SK-N-SH (cell line): ENCODE measurements at regions of chr6 and their contacts with region 1.

Region 1: DNA sequence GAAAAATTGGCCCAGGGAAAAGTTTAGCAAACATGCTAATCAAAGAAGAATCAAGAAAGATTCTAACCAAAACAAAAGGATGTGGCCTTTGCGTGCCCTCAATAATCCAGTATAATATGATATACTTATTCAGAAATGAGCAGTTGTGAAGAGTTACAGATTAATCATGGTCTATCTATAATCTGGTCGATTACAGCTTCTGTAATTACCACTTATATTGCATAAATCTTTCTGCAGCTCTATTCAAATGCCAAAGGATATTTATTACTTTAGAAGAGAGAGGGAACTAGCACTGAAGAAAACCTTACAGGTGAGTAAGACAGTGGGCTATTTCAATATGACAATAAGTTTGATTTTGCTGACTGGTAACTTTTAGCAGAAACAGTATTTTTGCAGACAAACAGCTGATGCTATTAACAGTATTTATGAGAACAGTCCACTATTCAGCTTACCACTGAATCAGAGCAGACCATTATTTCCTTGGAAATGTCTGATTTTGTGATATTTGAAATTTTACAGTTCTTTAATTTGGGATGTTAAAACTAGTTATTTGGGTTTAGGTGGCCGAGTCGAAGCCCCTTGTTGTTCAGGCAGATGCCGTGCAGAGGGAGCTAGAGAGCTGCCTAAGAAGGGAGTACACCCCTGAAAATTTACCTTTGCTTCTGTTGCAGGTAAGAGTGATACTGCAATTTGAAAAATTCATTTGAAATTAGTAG is 92.2 kb downstream of the CEP57L1 start:
- DNase-seq: peak; percentile 54
- H3K4me3 ChIP-seq: peak overlapping the region in 1 of 2 experiments; percentile 14; a peak in 1 of 4 replicates
- H3K27ac ChIP-seq: no peak overlapping the region
- H3K4me1 ChIP-seq: no peaks in the 10 kb centered on the region
- H3K27me3 ChIP-seq: peaks cover 9% of the 10 kb centered on the region; the same call in 1 of the 2 replicates
- CTCF ChIP-seq: peak; percentile 97
- EP300 ChIP-seq: no peak
- RAD21 ChIP-seq: peak; percentile 96

Region 2: GRCh38 chr6:109174911-109175310 is 12.6 kb before region 1 on chr6:
- CTCF ChIA-PET with region 1: interaction called, 20 read pairs
- POLR2A ChIA-PET with region 1: no interaction called
- DNase-seq: no peak
- H3K4me3 ChIP-seq: no peak overlapping the region
- H3K27ac ChIP-seq: peak overlapping the region in 1 of 2 experiments; percentile 36; a peak in 3 of 4 replicates
- H3K4me1 ChIP-seq: no peaks in the 10 kb centered on the region
- H3K27me3 ChIP-seq: no peaks in the 10 kb centered on the region
- CTCF ChIP-seq: no peak
- EP300 ChIP-seq: no peak
- RAD21 ChIP-seq: no peak

Region 3: GRCh38 chr6:109224116-109224875 is 36.7 kb after region 1 on chr6:
- CTCF ChIA-PET with region 1: interaction called, 13 read pairs
- POLR2A ChIA-PET with region 1: no interaction called
- DNase-seq: peak; percentile 43
- H3K4me3 ChIP-seq: no peak overlapping the region
- H3K27ac ChIP-seq: no peak overlapping the region; a peak in 1 of 4 replicates
- H3K4me1 ChIP-seq: peaks cover 0 to 19% of the 10 kb centered on the region in 2 experiments; a peak in 2 of 4 replicates
- H3K27me3 ChIP-seq: no peaks in the 10 kb centered on the region
- CTCF ChIP-seq: no peak
- EP300 ChIP-seq: peak in 1 of 2 experiments; percentile 59; a peak in 1 of 4 replicates
- RAD21 ChIP-seq: no peak

Region 4: GRCh38 chr6:109362102-109362884 is 174.7 kb after region 1 on chr6:
- CTCF ChIA-PET with region 1: interaction called, 10 read pairs
- POLR2A ChIA-PET with region 1: no interaction called
- DNase-seq: no peak
- H3K4me3 ChIP-seq: no peak overlapping the region
- H3K27ac ChIP-seq: no peak overlapping the region
- H3K4me1 ChIP-seq: no peaks in the 10 kb centered on the region
- H3K27me3 ChIP-seq: no peaks in the 10 kb centered on the region
- CTCF ChIP-seq: no peak
- EP300 ChIP-seq: no peak
- RAD21 ChIP-seq: no peak

Region 5: DNA sequence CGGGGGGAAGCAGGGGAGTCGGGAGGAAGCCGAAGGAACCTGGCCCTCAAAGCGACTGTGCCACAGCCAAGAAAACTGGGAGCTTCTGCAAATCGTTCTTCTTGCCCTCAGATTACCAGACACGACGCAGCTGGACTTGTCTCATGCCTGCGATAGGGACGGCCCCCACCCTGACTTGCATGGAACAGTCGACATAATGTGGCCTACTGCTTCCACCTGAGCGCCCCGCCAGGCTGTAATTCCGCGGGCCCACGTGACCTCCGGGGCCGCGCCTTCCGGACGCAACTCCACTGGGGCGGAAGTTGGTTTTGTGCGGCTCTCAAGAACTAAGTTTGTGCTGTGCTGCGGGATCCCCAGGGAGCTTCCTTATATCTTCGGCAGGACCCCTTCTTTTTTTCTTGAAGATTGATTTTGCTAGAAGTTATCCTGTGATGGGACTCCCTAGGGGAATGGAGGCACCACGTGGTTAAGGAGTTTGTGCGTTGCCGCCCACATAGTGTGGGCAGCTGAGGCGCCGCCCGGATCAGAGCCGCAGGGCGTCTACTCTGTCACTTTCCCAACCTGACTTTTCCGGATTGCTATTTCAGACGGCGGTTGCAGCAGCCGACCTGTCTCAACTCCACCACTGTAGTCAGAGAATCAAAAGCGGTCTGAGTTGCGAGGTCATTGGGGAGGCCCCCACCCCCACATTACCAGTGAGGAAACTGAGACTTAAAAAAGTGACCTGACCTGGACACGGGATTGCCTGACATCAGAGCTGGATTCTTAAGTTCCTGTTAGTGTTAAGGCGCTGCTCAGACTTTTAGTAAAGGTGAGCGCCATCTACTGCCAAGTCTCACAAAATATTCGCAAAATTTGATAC is 195.2 kb after region 1 on chr6:
- CTCF ChIA-PET with region 1: interaction called, 132 read pairs
- POLR2A ChIA-PET with region 1: interaction called, 10 read pairs
- DNase-seq: peak; percentile 92
- H3K4me3 ChIP-seq: peak overlapping the region; percentile 86 to 95
- H3K27ac ChIP-seq: peak overlapping the region; percentile 96 to 100
- H3K4me1 ChIP-seq: peaks cover 10 to 15% of the 10 kb centered on the region in 2 experiments; a peak in 2 of 4 replicates
- H3K27me3 ChIP-seq: no peaks in the 10 kb centered on the region
- CTCF ChIP-seq: peak; percentile 72
- EP300 ChIP-seq: no peak; a peak in 1 of 4 replicates
- RAD21 ChIP-seq: peak; percentile 76

Region 6: DNA sequence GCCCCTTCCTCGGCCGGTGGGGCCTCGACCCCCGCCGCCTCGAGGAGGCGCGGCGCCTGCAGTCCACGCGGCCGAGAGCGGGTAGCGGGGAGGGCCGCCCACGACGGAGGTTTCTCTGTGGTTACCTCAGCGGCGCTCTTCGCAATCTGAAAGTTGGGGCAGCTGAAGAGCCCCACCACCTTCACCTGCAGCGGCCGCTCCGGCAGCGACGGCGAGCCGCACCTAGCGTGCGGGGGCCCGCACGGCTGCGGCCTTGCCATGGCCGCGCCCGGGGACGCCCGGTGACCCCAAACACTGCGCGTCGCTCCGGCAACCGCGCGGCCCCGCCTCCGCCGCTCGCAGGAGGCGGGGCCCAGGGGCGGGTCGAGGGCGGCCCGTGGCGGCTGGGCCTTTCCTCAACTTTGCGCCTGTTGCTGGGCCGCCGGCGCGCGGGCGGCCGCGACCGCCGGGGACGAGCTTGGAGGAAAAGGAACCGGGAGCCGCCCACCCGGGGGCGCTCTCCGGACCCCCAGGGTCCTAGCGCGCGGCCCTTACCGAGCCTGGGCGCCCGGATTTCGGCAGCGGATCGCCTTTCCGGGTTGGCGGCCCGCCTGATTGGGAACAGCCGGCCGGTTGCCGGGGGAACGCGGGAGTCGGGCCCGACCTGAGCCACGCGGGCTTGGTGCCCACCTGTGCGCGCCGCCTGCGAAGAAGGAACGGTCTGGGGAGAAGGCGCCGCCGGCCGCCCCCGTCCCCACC is 252.9 kb after region 1 on chr6 and contains the starts of genes PPIL6 and SMPD2:
- CTCF ChIA-PET with region 1: interaction called, 12 read pairs
- POLR2A ChIA-PET with region 1: no interaction called
- DNase-seq: peak; percentile 98
- H3K4me3 ChIP-seq: peak within 1 kb of the TSS; percentile 88 to 90
- H3K27ac ChIP-seq: peak within 1 kb of the TSS; percentile 76 to 78
- H3K4me1 ChIP-seq: peaks cover 0 to 23% of the 10 kb centered on the region in 2 experiments; a peak in 1 of 4 replicates
- H3K27me3 ChIP-seq: no peaks in the 10 kb centered on the region
- CTCF ChIP-seq: peak; percentile 38; the same call in 1 of the 2 replicates
- EP300 ChIP-seq: 0 out of 4 replicates have a peak, but pooled peaks of 1 of the 2 experiments have one; percentile 49
- RAD21 ChIP-seq: peak; percentile 30
- polyA plus RNA-seq, gene PPIL6: 1.1 and 1.9 TPM in 2 replicates
- polyA plus RNA-seq, gene SMPD2: 9.7 and 11.4 TPM in 2 replicates